ENCODE measurements at regions of chr1 and their contacts with region 1.

Region 1: DNA sequence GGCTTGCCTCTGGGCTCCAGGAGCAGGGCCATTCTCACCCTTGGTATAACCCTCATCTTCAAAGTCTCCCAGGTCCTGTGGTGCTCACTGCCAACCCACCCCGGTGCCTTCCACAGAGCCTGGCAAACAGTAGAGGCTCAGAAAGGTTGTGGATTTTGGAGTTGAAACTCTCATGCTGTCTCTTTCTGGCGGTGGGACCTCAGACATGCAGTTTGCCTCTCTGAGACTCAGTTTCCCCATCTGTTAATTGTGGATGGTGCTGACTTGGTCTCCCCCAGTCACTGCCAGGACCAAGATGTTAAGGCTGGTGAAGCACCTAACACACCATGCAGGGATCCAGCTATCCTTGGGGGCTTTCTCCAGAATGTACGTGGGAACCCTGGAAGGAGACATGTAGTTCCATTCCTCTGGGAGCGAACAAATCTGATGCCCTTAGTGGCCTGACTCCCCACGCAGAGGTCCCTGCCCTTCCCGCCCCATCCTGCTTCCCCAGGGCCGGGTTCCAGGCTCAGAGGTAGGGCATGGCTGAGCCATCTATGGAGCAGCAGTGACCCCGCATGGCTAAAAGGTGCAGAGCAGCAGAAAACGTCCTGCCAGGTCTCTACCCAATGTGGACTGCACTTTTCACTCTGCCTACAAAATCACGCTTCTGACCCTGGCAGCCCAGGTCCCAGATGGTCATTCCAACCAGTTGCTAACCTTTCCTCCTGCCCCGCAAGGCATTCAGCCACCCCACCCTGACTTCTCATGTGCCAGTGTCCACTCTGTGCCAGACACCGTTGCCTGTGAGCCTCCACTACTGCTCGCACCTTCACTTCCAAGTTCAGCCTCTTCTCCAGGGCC is 9.2 kb upstream of the TTC22 start:
- DNase-seq: peak; percentile 81
- H3K4me3 ChIP-seq: no peak overlapping the region
- H3K27ac ChIP-seq: no peak overlapping the region
- H3K4me1 ChIP-seq: peaks cover 0 to 34% (median 14%) of the 10 kb centered on the region in 4 donors
- H3K27me3 ChIP-seq: no peaks in the 10 kb centered on the region
- CTCF ChIP-seq: peak; percentile 74 to 88 (median 80)
- EP300 ChIP-seq: no peak
- POLR2A ChIP-seq: no peak

Region 2: GRCh38 chr1:54052934-54053744 is 757.2 kb before region 1 on chr1 and contains the starts of genes TCEANC2 and TMEM59:
- in situ Hi-C with region 1: loop called in 1 of 4 experiments (anchors 25 kb)
- intact Hi-C with region 1: no loop called
- DNase-seq: peak; percentile 98
- H3K4me3 ChIP-seq: peak within 1 kb of the TSS; percentile 68 to 92 (median 86)
- H3K27ac ChIP-seq: peak within 1 kb of the TSS; percentile 95 to 99 (median 98)
- H3K4me1 ChIP-seq: peaks cover 25 to 52% (median 39%) of the 10 kb centered on the region in 4 donors
- H3K27me3 ChIP-seq: no peaks in the 10 kb centered on the region
- CTCF ChIP-seq: peak in 2 of 5 experiments; percentile 3 to 35
- EP300 ChIP-seq: no peak
- POLR2A ChIP-seq: peak; percentile 90
- total RNA-seq, gene TCEANC2: 1.4 to 7.1 (median 5.7) TPM
- total RNA-seq, gene TMEM59: 71.6 to 858 (median 226) TPM

Measured in transverse colon (tissue), 4 donors.